Mammary epithelial cell (primary cell): ENCODE measurements at regions of chr4 and their contacts with region 1.

Region 1: DNA sequence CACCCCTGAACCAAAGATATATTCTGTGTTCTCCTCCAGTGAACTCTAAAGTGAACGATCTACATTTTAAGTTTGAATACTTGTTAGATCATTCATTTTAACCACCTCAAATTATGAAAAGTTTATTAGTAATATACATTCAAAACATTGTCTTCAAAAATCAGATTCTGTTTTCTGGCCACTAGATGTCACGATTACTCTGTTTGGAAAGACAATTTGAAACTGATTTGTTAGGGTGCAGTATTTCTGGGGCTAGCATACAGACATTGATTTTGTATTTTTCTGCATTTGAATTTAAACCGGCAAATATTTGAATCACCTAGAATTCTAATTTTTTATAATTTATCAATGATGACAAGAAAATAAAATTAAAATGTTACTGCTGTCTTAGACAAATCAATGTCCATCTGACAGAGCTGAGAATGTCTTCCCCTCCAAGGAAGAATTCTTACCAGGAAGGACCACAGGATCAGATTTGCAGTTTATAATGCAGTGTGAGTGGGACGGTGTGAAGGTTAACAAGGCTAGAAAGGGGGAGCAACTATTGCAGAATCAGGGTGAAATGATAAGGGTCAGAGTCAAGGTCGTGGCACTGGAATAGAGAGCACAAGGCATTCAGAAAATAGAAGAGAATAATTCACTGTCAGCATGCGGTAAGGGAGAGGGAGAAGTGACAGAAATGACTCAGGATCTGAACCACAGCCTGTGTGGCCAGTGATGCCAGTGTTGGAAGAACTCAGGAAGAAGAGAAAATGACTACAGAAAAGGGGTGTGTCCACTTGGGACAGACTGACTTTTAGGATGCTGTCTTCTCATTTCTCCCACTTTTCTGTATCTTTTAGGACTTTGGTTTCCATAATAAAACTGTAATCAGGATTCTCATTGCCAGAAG is 91.6 kb downstream of the ANXA10 start:
- DNase-seq: peak; percentile 23
- H3K4me3 ChIP-seq: no peak overlapping the region
- H3K27ac ChIP-seq: no peak overlapping the region
- H3K4me1 ChIP-seq: no peaks in the 10 kb centered on the region
- H3K27me3 ChIP-seq: no peaks in the 10 kb centered on the region
- CTCF ChIP-seq: peak; percentile 47 to 64

Region 2: GRCh38 chr4:168019019-168019651 is 164.8 kb before region 1 on chr4:
- CTCF ChIA-PET with region 1: no interaction called
- dilution Hi-C with region 1: no loop called
- in situ Hi-C with region 1: no loop called
- intact Hi-C with region 1: no loop called
- DNase-seq: peak; percentile 32
- H3K4me3 ChIP-seq: no peak overlapping the region
- H3K27ac ChIP-seq: no peak overlapping the region
- H3K4me1 ChIP-seq: peaks cover 15% of the 10 kb centered on the region
- H3K27me3 ChIP-seq: no peaks in the 10 kb centered on the region
- CTCF ChIP-seq: no peak

Region 3: DNA sequence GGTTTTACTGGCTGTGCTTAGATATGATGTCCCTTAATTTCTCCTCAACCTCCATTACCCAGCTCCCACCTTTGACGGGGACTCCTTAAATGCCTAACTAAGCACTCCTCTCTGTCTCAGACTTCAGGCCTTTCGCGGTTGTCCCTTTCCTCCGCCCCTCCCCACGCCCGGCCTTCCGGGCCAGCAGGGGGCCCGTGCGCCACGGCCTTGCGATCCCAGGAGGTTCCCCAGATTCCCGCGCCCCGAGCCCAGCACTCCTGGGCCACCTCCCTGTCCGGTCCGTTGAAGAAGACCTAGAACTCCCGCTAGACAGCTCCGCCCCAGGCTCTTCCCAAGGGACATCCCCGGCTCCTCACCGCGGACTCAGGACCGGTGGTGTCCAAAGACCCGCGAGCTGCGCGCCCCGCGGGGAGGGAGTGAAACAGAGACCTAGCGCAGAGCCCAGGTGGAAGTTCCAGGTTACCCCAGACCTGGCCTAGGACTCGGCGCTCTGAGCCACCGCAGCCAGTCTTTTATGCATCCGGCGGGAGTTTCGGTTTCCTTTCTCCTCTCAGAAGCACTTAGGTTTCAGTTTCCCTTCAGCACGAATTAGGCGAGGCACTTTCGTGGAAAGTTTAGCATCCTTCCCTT is 134.4 kb after region 1 on chr4 and contains the start of gene DDX60:
- CTCF ChIA-PET with region 1: no interaction called
- dilution Hi-C with region 1: no loop called
- in situ Hi-C with region 1: no loop called
- intact Hi-C with region 1: loop called (anchors 5 kb)
- DNase-seq: peak; percentile 91
- H3K4me3 ChIP-seq: peak within 1 kb of the TSS; percentile 57 to 84 (median 70)
- H3K27ac ChIP-seq: peak within 1 kb of the TSS; percentile 91
- H3K4me1 ChIP-seq: peaks cover 17% of the 10 kb centered on the region
- H3K27me3 ChIP-seq: no peaks in the 10 kb centered on the region
- CTCF ChIP-seq: peak; percentile 29 to 68
- total RNA-seq, gene DDX60: 5.5 to 7.1 TPM

Region 4: GRCh38 chr4:168514249-168514852 is 330.4 kb after region 1 on chr4:
- CTCF ChIA-PET with region 1: no interaction called
- dilution Hi-C with region 1: loop called (anchors 25 kb)
- in situ Hi-C with region 1: loop called (anchors 25 kb)
- intact Hi-C with region 1: loop called (anchors 5 kb)
- DNase-seq: peak; percentile 24
- H3K4me3 ChIP-seq: no peak overlapping the region
- H3K27ac ChIP-seq: no peak overlapping the region
- H3K4me1 ChIP-seq: no peaks in the 10 kb centered on the region
- H3K27me3 ChIP-seq: no peaks in the 10 kb centered on the region
- CTCF ChIP-seq: peak; percentile 31 to 36

Region 5: GRCh38 chr4:168710353-168710946 is 526.5 kb after region 1 on chr4:
- CTCF ChIA-PET with region 1: no interaction called
- dilution Hi-C with region 1: no loop called
- in situ Hi-C with region 1: no loop called
- intact Hi-C with region 1: loop called (anchors 5 kb)
- DNase-seq: peak; percentile 54
- H3K4me3 ChIP-seq: no peak overlapping the region
- H3K27ac ChIP-seq: no peak overlapping the region
- H3K4me1 ChIP-seq: peaks cover 33% of the 10 kb centered on the region
- H3K27me3 ChIP-seq: no peaks in the 10 kb centered on the region
- CTCF ChIP-seq: peak; percentile 49 to 74

Region 6: DNA sequence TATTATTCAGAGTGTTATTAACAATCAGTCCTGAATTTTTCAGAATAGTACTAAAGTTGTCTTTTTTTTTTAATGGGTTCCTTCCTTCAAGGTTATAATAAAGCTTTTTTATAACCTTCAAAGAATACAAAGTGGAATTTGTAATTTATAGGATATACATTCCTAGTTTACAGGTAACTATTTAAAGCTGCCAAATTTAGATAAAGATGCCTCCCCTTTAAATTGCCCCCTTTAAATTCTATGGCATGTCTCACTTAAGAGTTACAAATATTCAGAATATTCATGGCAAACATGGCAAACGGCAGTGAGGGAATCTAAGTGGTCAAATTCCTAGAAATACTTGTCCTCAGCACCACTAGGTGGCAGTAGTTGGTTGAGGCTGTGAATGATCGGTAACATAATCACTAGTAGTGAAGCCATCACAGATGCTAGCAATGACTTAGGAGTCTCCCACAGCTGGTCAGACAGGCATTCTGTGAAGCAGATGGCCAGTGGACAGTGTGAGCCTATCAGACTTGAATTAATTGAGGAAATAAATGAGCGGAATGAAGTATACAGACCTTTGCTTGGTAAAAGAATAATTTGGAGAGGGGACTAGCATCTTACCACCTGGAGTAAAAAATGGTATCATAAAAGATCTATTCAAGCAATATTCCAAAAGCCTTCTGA is 739.7 kb after region 1 on chr4:
- CTCF ChIA-PET with region 1: no interaction called
- dilution Hi-C with region 1: no loop called
- in situ Hi-C with region 1: loop called (anchors 25 kb)
- intact Hi-C with region 1: loop called (anchors 5 kb)
- DNase-seq: peak; percentile 42
- H3K4me3 ChIP-seq: no peak overlapping the region
- H3K27ac ChIP-seq: no peak overlapping the region
- H3K4me1 ChIP-seq: no peaks in the 10 kb centered on the region
- H3K27me3 ChIP-seq: no peaks in the 10 kb centered on the region
- CTCF ChIP-seq: peak; percentile 58 to 71

Region 7: DNA sequence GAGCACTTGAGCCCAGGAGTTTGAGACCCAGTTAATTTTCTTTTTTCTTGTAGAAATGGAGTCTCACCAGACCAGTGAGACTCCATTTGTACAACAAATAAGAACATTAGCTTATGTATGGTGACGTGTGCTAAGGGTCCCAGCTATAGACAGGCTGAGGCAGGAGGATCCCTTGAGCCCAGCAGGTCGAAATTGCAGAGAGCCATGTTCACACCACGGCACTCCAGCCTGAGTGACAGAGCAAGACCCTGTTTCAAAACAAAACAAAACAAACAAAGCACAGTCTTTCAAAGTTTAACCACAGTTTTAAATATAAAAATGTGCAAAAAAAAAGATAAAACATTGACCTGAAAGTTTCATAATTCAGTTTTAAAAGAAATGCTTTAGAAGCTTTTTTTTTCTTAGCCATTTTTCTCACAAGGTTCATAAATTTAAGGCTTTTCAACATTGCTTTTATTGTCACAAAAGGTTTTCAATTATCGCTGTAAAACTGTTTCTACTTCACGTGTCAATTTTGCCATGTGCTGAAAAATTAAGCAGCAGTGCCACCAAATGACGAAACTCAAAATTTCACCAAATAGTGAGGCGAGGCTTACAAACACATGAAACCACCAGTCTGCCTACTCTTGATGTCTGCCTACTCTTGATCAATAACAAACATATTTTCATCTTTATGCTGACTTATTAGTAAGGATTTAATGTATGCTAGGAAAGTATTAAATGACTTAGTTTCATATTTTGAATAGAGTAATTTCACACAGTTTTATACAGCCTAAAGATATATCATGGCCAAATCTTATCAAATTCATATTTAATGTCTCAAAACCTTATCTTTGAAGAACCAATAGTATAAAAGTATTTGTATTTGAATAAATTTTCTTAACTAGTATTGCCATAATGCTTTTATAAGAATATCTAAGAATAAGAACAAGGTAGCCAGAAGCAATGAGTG is 1302.1 kb after region 1 on chr4:
- CTCF ChIA-PET with region 1: no interaction called
- dilution Hi-C with region 1: no loop called
- in situ Hi-C with region 1: no loop called
- intact Hi-C with region 1: loop called (anchors 2 kb)
- DNase-seq: peak; percentile 50
- H3K4me3 ChIP-seq: no peak overlapping the region
- H3K27ac ChIP-seq: peak overlapping the region; percentile 15
- H3K4me1 ChIP-seq: peaks cover 4% of the 10 kb centered on the region
- H3K27me3 ChIP-seq: no peaks in the 10 kb centered on the region
- CTCF ChIP-seq: peak; percentile 43 to 54